KBM-7 (cell line): ENCODE measurements at regions of chr5 and their contacts with region 1.

Region 1: DNA sequence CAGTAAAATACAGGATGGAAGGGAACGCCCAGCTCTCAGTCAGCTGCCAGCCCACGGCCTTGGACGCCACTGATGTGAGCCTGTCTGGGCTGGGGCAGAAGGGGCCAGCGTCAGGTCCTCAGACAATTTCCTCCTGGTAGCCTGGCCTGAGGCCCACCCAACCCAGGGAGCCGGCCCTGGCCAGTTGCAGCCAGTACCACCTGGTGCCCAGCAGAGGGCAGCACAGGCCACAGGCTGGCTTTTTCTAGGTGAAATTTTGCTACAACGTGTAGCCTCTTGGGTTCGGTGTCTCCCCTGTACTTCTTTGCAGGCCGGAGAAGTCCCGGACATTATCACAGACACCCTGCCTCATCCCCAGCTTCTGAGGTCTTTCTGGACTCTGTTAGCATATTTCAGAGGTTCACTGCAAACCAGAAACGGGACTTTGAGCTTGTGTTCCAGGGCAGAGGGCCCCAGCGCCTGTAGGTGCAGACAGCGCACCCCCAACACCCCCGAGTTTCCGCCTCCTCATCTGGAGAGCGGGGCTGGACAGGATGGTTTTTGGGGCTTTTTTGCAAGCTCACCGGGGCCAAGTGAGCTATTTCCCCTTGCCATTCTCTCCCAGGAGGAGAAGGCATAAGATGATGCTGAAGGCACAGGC is 45.9 kb upstream of the KCNMB1 start:
- DNase-seq: peak; percentile 69

Region 2: GRCh38 chr5:170597109-170597751 is 162.1 kb after region 1 on chr5:
- in situ Hi-C with region 1: no loop called
- DNase-seq: no peak

Region 3: DNA sequence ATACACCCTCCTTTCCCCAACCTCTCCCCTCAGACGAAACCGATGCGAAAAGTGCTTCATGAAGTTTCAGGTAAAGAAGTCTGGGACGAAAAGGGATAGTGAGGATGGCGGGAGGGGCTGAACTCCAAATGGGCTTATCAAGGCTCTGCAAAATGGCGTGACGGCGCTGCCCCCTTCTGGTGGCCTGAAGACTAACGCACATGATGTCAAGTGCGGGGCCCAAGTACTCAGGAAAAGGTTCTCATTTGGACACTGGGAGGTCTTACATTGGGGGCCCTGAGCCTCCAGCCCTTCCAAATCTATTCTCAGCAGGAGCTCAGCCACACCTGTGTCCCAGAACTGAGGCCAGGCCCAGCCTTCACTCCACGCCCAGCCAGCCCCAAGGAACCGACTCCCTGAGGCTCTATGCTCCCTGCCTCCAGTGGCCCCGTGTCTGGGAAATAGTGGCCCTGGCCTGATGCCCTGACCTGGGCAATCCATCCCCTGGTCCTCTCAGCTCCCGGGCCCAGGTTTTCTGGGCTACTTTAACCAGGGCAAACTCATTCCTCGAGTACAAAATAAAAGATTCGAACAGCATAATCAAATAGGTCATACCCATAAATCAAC is 188.6 kb after region 1 on chr5:
- in situ Hi-C with region 1: loop called (anchors 10 kb)
- DNase-seq: peak; percentile 42